SK-MEL-5 (cell line): ENCODE measurements at regions of chr4 and their contacts with region 1.

Region 1: GRCh38 chr4:168710353-168710946 is 213.6 kb downstream of the PALLD start:
- DNase-seq: peak; percentile 76

Region 2: GRCh38 chr4:168433571-168433970 is 276.9 kb before region 1 on chr4:
- in situ Hi-C with region 1: no loop called
- DNase-seq: no peak

Region 3: DNA sequence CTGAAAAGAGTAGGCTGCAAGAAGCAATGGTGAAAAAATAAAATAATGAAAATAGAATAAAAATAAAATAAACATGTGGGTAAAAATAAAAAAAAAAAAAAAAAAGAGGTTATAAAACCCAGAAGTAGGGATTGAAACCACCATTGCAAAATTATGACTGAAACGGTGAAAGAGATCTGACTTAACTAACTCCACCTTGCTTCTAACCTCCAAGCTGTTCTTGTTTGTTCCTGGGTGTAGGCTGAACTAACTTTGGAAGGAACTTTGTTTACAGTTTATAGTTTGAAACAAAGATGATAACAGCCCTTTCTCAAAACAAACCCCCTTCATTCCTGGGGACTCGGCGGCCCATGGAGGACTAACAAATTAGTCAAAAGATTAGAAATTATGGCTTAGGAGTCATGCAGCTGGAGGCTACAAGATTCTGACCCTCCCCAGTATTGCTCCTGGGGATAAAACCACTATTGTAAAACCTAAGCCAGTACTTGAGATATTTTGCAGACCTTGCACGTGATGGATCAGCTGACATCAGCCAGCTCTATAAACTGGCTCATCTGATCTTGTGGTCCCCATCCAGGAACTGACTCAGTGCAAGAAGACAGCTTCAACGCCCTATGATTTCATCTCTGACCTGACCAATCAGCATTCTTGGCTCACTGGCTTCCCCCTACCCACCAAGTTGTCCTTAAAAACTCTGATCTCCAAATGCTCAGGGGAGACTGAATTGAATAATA is 260.6 kb before region 1 on chr4:
- in situ Hi-C with region 1: no loop called
- DNase-seq: peak; percentile 98

Region 4: DNA sequence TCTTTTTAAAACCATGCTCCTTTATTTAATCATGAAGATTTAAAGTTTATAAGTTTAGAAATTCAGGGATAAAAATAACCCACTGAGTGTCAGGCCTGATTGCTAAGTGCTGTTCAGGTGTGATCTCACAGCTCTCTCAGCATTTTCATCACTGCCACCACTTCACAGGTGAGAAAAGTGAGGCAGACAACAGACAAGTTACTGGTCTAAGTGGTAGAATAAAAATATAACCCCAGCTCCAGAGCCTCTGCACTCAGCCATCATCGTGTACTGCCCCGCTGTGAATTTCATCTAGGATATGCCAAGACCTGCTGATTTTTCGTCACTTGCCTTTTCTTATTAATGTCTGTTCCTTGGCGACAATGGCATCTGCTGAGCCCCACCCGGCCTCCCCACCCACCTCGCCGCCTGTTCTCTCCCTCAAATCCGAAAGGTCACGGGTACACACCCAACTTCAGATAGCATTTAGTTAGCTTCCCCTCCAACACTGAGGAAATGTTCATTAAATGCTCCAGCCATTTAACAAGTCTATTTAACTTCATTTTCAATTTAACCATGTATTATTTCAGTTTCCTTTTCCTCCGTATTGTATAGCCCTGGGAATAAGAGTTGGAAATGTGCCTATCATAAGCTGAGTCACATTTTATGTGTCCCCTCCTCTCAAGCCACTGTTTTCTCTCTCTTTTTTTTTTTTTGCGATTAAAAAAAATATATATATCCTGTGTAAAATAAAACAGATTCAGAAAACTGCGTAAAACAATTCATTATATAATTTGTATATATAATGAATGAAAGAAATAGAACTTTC is 63.1 kb after region 1 on chr4:
- in situ Hi-C with region 1: loop called (anchors 5 kb)
- DNase-seq: no peak

Region 5: DNA sequence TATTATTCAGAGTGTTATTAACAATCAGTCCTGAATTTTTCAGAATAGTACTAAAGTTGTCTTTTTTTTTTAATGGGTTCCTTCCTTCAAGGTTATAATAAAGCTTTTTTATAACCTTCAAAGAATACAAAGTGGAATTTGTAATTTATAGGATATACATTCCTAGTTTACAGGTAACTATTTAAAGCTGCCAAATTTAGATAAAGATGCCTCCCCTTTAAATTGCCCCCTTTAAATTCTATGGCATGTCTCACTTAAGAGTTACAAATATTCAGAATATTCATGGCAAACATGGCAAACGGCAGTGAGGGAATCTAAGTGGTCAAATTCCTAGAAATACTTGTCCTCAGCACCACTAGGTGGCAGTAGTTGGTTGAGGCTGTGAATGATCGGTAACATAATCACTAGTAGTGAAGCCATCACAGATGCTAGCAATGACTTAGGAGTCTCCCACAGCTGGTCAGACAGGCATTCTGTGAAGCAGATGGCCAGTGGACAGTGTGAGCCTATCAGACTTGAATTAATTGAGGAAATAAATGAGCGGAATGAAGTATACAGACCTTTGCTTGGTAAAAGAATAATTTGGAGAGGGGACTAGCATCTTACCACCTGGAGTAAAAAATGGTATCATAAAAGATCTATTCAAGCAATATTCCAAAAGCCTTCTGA is 213.2 kb after region 1 on chr4:
- in situ Hi-C with region 1: loop called (anchors 25 kb)
- DNase-seq: peak; percentile 86